T-cell (primary cell): ENCODE measurements at regions of chr5 and their contacts with region 1.

Region 1: DNA sequence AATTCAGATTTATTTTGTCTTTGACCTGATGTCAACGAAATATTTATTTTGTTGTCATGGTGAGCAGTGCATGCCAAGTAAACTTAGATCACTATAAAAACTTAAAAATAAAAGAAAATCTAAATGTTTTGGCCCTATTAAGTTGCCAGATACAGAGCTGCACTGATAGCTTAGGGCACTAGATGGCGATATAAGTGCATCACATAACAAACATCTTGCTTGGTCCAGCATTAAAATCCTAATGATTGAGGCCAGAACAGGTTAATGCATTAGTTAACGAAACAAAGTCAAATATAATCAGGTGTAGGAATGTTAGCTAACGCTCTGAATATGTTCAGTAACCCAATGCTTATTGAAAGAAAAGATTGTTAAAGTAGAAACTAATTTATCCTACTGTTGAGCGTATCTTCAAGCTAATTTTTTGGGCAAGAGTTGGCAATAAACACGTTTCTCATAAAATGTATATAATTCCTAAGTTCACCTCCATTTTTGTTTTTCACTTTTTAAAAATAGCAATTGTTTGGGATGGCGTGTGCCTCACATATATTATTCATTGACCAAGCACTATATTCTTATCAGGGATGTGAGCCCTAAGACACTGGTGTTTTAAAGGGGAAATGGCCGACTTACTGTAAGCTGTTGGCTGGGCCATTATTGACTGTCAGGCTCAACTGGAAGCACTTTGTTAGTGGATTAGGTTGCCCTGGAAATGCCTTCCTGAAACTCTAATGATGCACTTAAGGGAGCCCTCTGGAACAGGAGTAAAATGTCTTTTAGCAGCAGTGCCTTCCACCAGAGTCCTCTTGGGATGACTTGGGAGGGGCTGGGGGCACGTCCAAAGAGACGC is 33.3 kb downstream of the KCTD16 start:
- DNase-seq: peak in 17 of 35 experiments; percentile 3 to 76 (median 19)
- ATAC-seq: peak in 3 of 4 experiments; percentile 43 to 66 (median 55)
- H3K4me3 ChIP-seq: no peak overlapping the region
- H3K4me3 Mint-ChIP-seq: no peak overlapping the region
- H3K27ac ChIP-seq: no peak overlapping the region
- H3K27ac Mint-ChIP-seq: no peak overlapping the region
- H3K4me1 ChIP-seq: no peaks in the 10 kb centered on the region
- H3K4me1 Mint-ChIP-seq: peaks cover 0 to 5% (median 4%) of the 10 kb centered on the region in 3 donors
- H3K27me3 ChIP-seq: peaks cover 4 to 20% of the 10 kb centered on the region in 2 experiments
- H3K27me3 Mint-ChIP-seq: peaks cover 54 to 60% of the 10 kb centered on the region in 2 donors

Region 2: DNA sequence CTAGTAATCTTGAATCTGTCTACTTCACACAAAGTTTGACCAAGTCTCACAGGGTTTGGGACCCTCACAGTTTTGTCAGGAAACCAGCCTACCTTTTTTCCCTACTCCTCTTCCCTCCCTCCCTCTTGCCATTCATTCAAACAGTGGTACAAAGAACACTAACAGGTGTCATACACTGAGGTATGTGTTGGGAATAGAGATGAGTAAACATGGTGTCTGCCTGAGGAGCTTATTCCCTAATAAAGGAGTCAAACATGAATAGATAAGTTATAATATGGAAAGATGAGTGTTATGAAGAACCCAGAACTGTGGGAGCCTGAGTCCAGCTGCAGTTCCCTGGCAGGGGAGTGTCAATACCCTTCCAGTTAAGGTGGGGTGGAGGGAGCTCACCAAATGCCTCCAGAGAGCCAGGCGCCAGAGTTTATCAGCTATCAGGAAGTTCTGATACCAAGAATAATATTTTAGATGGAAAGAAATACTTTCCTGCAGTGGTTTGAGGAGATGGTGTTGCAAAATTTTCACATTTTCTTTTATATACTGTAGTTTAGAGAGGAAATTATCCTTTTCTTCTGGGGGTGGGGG is 617.1 kb before region 1 on chr5:
- CTCF ChIA-PET with region 1: interaction called in 1 of 2 experiments, 11 read pairs
- POLR2A ChIA-PET with region 1: no interaction called
- DNase-seq: no peak
- ATAC-seq: no peak
- H3K4me3 ChIP-seq: no peak overlapping the region
- H3K4me3 Mint-ChIP-seq: no peak overlapping the region
- H3K27ac ChIP-seq: no peak overlapping the region
- H3K27ac Mint-ChIP-seq: no peak overlapping the region
- H3K4me1 ChIP-seq: no peaks in the 10 kb centered on the region
- H3K4me1 Mint-ChIP-seq: peaks cover 9 to 30% (median 19%) of the 10 kb centered on the region in 3 donors
- H3K27me3 ChIP-seq: no peaks in the 10 kb centered on the region
- H3K27me3 Mint-ChIP-seq: no peaks in the 10 kb centered on the region

Region 3: GRCh38 chr5:145825751-145826180 is 1621.8 kb after region 1 on chr5:
- CTCF ChIA-PET with region 1: interaction called, 5 to 20 read pairs
- POLR2A ChIA-PET with region 1: no interaction called
- DNase-seq: peak in 1 of 35 experiments; percentile 41
- ATAC-seq: no peak
- H3K4me3 ChIP-seq: no peak overlapping the region
- H3K4me3 Mint-ChIP-seq: no peak overlapping the region
- H3K27ac ChIP-seq: no peak overlapping the region
- H3K27ac Mint-ChIP-seq: no peak overlapping the region
- H3K4me1 ChIP-seq: peaks cover 0 to 2% of the 10 kb centered on the region in 2 experiments
- H3K4me1 Mint-ChIP-seq: peaks cover 3 to 5% (median 5%) of the 10 kb centered on the region in 3 donors
- H3K27me3 ChIP-seq: no peaks in the 10 kb centered on the region
- H3K27me3 Mint-ChIP-seq: no peaks in the 10 kb centered on the region